ENCODE measurements at regions of chr9 and their contacts with region 1.

Region 1: DNA sequence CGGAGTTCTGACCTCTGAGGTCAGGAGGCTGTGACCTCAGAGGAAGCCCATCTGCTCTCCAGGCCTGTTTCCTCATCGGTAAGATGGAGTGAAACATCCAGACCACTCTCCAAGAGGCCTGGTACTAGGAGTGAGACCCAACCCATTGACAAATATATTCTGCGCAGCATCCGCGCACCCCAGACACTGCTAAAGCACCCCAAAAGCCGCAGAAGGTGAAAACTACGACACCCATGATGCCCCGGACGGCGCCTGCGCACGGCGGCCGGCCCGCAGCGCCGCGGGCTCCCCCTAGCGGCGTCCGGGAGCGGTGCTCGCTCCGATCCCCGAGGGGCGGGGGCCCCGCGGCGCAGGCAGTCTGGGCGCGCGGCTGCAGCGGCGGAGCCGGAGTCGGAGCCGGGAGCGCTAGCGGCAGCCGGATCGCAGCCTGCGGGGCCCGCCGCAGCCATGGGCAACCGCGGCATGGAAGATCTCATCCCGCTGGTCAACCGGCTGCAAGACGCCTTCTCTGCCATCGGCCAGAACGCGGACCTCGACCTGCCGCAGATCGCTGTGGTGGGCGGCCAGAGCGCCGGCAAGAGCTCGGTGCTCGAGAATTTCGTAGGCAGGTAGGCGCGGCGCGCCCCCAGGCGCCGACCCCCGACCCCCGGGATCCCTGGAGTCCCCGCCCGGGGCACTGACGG is at the start of gene DNM1:
- DNase-seq: peak in 1 of 2 donors; percentile 69
- ATAC-seq: peak; percentile 74 to 91 (median 86)
- H3K4me3 ChIP-seq: peak within 1 kb of the TSS; percentile 20 to 75 (median 70)
- H3K27ac ChIP-seq: peak within 1 kb of the TSS in 8 of 10 donors; percentile 16 to 69 (median 56)
- H3K4me1 ChIP-seq: peaks cover 0 to 18% (median 10%) of the 10 kb centered on the region in 9 donors
- H3K27me3 ChIP-seq: peaks cover 0 to 20% (median 16%) of the 10 kb centered on the region in 7 donors
- CTCF ChIP-seq: peak; percentile 71 to 99 (median 93)
- total RNA-seq, gene DNM1: 2.1 to 7.7 (median 3.9) TPM

Region 2: GRCh38 chr9:127916665-127917613 is 286.2 kb before region 1 on chr9 and contains the start of gene ST6GALNAC4:
- intact Hi-C with region 1: no loop called
- DNase-seq: peak; percentile 94 to 96
- ATAC-seq: peak; percentile 91 to 97 (median 94)
- H3K4me3 ChIP-seq: peak within 1 kb of the TSS; percentile 64 to 96 (median 76)
- H3K27ac ChIP-seq: peak within 1 kb of the TSS in 9 of 10 donors; percentile 40 to 79 (median 77)
- H3K4me1 ChIP-seq: peaks cover 10 to 61% (median 49%) of the 10 kb centered on the region in 9 donors
- H3K27me3 ChIP-seq: peaks cover 0 to 3% (median 0%) of the 10 kb centered on the region in 7 donors
- CTCF ChIP-seq: no peak
- total RNA-seq, gene ST6GALNAC4: 23.2 to 52.9 (median 33.9) TPM

Region 3: GRCh38 chr9:128243215-128244018 is 40.3 kb after region 1 on chr9:
- intact Hi-C with region 1: loop called in 1 of 10 experiments (anchors 2 kb)
- DNase-seq: peak; percentile 48 to 52
- ATAC-seq: peak; percentile 13 to 42 (median 20)
- H3K4me3 ChIP-seq: peak overlapping the region in 4 of 10 donors; percentile 14 to 54 (median 34)
- H3K27ac ChIP-seq: peak overlapping the region in 9 of 10 donors; percentile 59 to 86 (median 73)
- H3K4me1 ChIP-seq: peaks cover 7 to 38% (median 18%) of the 10 kb centered on the region in 9 donors
- H3K27me3 ChIP-seq: no peaks in the 10 kb centered on the region
- CTCF ChIP-seq: no peak

Measured in heart right ventricle (tissue), 16 donors.